ENCODE measurements at regions of chrX and their contacts with region 1.

Region 1: DNA sequence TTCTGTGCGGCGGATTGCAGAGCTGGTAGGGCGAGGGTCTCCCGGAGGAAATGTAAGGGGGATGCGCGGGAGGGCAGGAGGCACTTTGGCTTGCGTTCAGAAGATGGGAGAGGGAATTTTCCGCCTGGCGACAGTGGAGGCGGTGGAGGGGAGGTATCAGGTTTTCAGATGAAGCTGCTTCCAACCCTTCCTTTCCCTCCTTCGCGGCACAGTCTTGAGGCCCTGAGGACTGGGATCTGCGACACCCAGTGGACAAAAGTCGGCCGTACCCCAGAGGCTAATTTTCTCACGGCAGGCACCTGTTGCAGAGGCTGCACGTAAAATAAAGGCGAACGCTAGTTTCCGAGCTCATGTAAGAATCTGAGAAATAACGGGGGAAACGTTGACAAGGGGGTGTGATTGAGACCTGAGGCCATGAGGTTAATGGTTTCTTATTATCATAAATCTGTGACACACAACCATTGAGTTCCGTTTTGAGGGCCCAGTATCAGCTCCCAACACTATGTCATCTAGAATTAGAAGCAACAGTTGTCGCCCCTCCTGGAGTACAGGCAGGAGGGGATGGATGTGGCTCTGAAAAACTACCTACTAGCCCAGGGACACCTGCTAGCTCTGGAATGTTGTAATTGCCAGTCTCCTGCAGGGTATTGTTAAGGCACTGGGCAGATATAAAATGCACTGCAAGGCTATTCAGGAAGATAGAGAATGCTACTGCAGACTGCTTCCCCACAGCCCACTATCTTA is 1.1 kb downstream of the ZCCHC18 start:
- DNase-seq: peak; percentile 65
- ATAC-seq: peak; percentile 63
- H3K4me3 ChIP-seq: peak overlapping the region; percentile 41 to 73 (median 65)
- H3K4me3 Mint-ChIP-seq: peak overlapping the region; percentile 92
- H3K27ac ChIP-seq: peak overlapping the region; percentile 29 to 63
- H3K27ac Mint-ChIP-seq: peak overlapping the region; percentile 91
- H3K4me1 ChIP-seq: peaks cover 29 to 39% of the 10 kb centered on the region in 2 donors
- H3K4me1 Mint-ChIP-seq: peaks cover 41% of the 10 kb centered on the region
- H3K27me3 ChIP-seq: no peaks in the 10 kb centered on the region
- H3K27me3 Mint-ChIP-seq: no peaks in the 10 kb centered on the region
- CTCF ChIP-seq: peak; percentile 53

Region 2: GRCh38 chrX:104098151-104098808 is 15.1 kb before region 1 on chrX:
- CTCF ChIA-PET with region 1: interaction called, 31 read pairs
- POLR2A ChIA-PET with region 1: no interaction called
- intact Hi-C with region 1: loop called (anchors 1 kb)
- DNase-seq: peak; percentile 77
- ATAC-seq: peak; percentile 63
- H3K4me3 ChIP-seq: no peak overlapping the region
- H3K4me3 Mint-ChIP-seq: no peak overlapping the region
- H3K27ac ChIP-seq: no peak overlapping the region
- H3K27ac Mint-ChIP-seq: no peak overlapping the region
- H3K4me1 ChIP-seq: no peaks in the 10 kb centered on the region
- H3K4me1 Mint-ChIP-seq: peaks cover 2% of the 10 kb centered on the region
- H3K27me3 ChIP-seq: no peaks in the 10 kb centered on the region
- H3K27me3 Mint-ChIP-seq: peaks cover 4% of the 10 kb centered on the region
- CTCF ChIP-seq: peak; percentile 70

Region 3: GRCh38 chrX:104156630-104157529 is 43.5 kb after region 1 on chrX and contains the start of gene SLC25A53:
- CTCF ChIA-PET with region 1: interaction called, 5 read pairs
- POLR2A ChIA-PET with region 1: interaction called, 10 read pairs
- intact Hi-C with region 1: loop called (anchors 2 kb)
- DNase-seq: peak; percentile 90
- ATAC-seq: peak; percentile 84
- H3K4me3 ChIP-seq: peak within 1 kb of the TSS; percentile 57 to 74 (median 71)
- H3K4me3 Mint-ChIP-seq: peak within 1 kb of the TSS; percentile 99
- H3K27ac ChIP-seq: peak within 1 kb of the TSS; percentile 96 to 99
- H3K27ac Mint-ChIP-seq: peak within 1 kb of the TSS; percentile 100
- H3K4me1 ChIP-seq: peaks cover 5 to 16% of the 10 kb centered on the region in 2 donors
- H3K4me1 Mint-ChIP-seq: peaks cover 22% of the 10 kb centered on the region
- H3K27me3 ChIP-seq: no peaks in the 10 kb centered on the region
- H3K27me3 Mint-ChIP-seq: no peaks in the 10 kb centered on the region
- CTCF ChIP-seq: no peak
- total RNA-seq, gene SLC25A53: 17.1 and 20.7 TPM in 2 replicates

Measured in B cell (primary cell).